ENCODE measurements at regions of chr3 and their contacts with region 1.

Region 1: DNA sequence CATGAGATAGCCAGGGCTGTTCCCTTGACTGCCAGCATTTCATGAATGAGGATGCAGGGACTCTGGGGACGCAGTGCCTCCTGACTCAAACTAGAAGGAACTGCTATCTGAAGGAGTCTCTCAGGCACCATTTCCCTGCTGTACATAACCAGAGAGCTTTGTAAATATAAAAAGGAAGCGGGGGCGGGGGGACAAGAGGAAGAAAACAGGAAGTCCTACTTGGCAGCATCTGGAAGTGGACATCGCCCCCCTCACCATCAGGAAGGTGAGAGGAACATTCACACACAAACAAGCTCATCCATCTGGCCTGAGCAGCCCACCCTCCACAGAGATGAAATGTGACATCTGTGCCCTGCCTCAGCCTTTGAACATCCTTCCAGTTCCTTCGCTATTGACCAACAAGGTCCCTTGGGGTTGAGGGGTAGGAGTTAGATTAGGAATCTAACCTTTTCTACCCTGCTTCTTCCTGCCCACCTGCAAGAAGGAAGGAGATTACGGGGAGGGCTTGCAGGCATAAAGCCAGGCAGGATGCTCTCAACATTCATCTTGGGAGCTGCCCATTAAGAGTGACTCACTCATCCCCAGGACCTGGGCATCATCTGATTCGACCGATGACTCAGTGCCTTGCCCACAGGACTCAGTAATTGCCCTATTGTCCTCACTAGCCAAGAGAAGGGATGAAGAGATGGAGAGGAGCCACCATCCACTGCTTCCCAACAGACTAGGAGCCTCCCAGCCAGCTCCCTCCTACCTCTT is 31.9 kb downstream of the SH3BP5 start:
- DNase-seq: no peak
- H3K4me3 ChIP-seq: no peak overlapping the region
- H3K27ac ChIP-seq: no peak overlapping the region
- H3K4me1 ChIP-seq: no peaks in the 10 kb centered on the region
- H3K27me3 ChIP-seq: no peaks in the 10 kb centered on the region
- CTCF ChIP-seq: no peak
- EP300 ChIP-seq: no peak
- POLR2A ChIP-seq: no peak
- RAD21 ChIP-seq: no peak

Region 2: DNA sequence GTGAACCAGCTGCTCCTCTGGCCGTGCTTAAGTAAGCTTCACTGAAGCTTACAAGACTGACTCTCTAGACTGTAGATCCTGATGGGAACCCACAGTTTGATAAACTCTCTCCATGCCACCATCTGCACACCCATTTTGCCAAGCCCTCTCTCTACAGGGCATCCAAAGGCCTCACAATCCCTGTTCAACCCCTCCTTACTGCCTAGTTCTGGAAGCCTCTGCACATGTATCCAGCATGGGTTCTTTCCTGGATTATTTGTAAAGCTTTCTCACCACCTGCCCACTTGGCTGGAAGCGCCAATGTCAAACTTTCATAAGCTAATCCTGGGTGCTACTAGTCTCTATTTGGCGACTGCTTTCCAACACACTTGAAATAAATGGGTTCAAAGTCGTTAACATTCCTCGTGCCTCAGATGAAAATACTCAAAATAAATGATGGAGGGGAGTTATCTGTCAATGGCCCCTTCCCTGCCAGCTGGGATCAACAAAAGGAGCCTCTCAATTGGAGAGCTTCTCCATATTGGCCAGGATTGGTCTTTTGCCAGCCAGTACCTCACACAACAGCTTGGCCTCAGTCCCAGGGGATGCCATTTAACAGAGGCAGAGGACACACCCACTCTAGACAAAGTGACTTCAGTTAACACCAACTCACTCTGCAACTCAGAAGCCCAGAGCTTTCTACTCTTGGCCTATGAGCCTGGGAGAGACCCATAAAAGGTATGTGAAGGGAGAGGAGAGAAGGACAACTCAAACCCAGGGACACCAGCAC is 16.2 kb before region 1 on chr3:
- CTCF ChIA-PET with region 1: interaction called, 16 read pairs
- POLR2A ChIA-PET with region 1: no interaction called
- DNase-seq: no peak
- H3K4me3 ChIP-seq: no peak overlapping the region
- H3K27ac ChIP-seq: no peak overlapping the region
- H3K4me1 ChIP-seq: peaks cover 0 to 8% (median 3%) of the 10 kb centered on the region in 4 experiments; a peak in 4 of 7 replicates
- H3K27me3 ChIP-seq: no peaks in the 10 kb centered on the region
- CTCF ChIP-seq: no peak
- EP300 ChIP-seq: no peak
- POLR2A ChIP-seq: no peak
- RAD21 ChIP-seq: no peak

Measured in H1 (cell line).